Brain microvascular endothelial cell (primary cell): ENCODE measurements at regions of chr10 and their contacts with region 1.

Region 1: DNA sequence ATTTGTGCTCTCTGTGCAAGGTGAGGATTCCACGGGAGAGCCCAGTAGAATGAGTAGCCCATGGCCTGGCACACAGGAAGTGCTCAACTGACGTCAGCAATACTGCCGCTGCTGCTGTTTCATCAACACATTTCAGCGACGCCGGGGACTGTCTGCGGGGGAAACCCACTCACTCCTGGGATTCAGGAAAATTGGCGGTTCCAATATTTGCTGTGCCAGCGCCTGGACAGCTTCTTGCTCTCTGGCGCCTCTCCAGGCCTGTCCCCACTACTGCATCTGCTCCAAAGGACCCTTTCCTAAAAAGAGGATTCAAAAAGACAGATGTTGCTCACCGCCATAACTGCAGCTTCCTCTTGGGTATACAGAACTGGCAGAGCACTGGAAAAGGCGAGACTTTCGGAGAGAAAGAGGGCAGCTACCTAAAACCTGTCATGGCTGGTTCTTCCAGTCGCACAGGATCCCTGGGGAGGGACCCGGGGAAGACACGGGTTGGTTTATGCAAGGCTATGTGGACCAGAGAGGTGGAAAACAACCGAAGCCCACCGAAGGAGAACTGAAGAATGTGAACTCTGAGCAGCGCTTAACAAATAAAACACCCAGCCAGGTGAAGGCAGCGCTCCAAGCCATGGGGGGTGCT is 39.7 kb upstream of the ENO4 start:
- DNase-seq: no peak
- H3K4me3 ChIP-seq: no peak overlapping the region
- H3K27ac ChIP-seq: no peak overlapping the region
- H3K27me3 ChIP-seq: no peaks in the 10 kb centered on the region
- CTCF ChIP-seq: peak; percentile 65

Region 2: DNA sequence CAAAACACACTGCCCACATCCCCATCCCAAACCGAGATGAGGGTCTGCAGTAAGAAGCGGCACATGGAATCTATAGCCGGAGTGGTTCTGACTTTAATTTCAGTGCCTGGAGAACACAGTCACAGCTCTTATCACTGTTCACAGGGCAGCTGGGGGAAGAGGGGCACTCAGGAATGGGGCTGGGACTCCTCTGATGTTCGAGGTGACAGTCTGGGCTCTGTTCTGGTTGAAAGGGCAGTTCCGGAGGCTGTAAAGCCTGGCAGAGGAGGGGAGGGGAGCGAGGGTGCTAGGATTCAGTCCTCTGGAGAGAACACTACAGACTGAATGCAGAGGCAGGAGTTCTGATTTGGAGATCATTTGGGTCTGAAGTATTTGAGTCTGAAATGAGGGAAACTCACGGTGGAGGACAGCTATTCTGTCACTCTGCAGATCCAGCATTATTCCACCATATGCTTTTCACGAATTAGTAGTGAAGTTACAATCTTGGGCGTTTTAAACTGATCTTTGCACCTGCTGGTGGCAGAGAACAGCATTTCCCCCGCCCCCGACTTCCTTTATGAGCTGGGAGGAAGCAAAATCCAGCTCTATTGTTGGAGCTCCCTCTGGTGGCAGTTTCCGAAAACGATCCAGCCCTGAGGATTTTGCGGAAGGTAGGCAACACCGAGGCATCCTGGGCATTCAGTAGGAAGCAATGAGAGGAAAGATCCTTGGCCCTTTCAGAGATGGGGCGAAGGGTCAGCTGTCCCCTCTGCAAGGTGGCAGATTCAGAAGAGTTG is 365.0 kb after region 1 on chr10:
- in situ Hi-C with region 1: loop called (anchors 25 kb)
- DNase-seq: peak; percentile 68
- H3K4me3 ChIP-seq: peak overlapping the region; percentile 36
- H3K27ac ChIP-seq: no peak overlapping the region
- H3K27me3 ChIP-seq: peaks cover 18% of the 10 kb centered on the region
- CTCF ChIP-seq: peak; percentile 91